Mammary epithelial cell (primary cell): ENCODE measurements at regions of chr14 and their contacts with region 1.

Region 1: GRCh38 chr14:52351233-52352060 is 37.3 kb downstream of the PTGER2 start:
- DNase-seq: peak; percentile 49
- H3K4me3 ChIP-seq: no peak overlapping the region
- H3K27ac ChIP-seq: no peak overlapping the region
- H3K4me1 ChIP-seq: peaks cover 44% of the 10 kb centered on the region
- H3K27me3 ChIP-seq: no peaks in the 10 kb centered on the region
- CTCF ChIP-seq: no peak

Region 2: DNA sequence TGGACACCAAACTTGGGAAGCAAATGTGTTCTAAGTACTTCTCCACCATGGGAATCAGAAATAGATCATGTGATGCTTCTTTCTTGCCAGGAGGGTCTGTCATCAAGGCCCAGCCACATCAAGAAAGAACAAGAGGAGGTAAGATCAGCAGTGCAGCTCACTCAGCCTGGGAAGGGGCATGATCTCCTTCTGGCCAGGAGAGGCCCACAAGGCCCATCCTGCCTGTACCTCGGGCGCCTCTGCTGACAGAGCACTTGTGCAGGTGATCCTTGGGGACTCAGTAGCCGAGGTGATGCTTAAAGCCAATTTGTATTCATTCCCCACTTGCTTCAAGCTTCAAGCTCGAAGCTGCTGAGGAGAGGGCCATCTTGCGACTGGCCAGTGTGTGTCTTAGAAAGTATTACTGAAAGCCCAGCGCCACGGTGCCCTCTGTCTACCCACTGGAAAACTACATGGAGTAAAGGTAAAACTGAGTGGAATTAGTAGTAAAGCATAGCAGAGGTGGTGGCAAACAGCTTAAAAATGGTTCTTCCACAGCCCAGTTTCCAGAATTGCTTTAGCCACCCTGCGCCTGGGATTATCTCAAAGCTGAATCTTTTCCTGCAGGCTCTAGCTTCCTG is 335.9 kb before region 1 on chr14:
- CTCF ChIA-PET with region 1: interaction called, 11 read pairs
- dilution Hi-C with region 1: no loop called
- in situ Hi-C with region 1: no loop called
- intact Hi-C with region 1: no loop called
- DNase-seq: no peak
- H3K4me3 ChIP-seq: no peak overlapping the region
- H3K27ac ChIP-seq: no peak overlapping the region
- H3K4me1 ChIP-seq: no peaks in the 10 kb centered on the region
- H3K27me3 ChIP-seq: no peaks in the 10 kb centered on the region
- CTCF ChIP-seq: peak; percentile 42 to 54

Region 3: DNA sequence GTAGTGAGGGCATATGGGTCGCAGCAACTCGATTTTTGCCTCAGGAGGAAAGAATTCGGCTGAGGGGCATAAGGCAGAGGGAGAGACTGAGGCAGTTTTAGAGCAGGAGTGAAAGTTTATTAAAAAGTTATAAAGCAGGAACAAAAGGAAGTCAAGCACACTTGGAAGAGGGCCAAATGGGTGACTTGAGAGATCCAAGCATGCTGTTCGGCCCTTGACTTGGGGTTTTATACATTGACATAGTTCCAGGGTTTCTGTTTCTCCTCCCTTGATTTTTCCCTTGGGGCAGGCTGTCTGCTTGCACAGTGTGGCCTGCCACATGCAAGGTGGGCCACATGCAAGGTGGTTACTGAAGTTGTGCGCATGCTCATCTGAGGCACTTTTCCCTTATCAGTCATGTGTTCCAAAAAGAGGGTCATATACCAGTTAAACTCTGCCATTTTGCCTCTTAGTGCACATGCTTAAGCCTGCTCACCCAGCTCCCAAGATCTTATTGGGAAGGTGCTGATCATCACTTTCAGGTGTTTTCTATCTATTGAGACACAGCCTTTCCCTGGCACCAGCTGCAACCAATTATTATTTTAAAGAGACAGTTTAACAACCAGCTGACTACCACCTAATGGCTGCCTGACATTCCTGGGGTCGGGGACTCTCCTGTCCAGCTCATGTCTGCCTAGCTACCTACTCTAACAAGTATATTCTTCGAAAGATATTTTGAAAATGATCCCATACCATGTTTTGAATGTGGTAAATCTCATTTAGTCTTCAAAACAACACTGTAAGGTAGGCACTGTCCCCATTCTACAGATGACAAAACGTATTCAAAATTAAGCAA is 17.4 kb before region 1 on chr14:
- CTCF ChIA-PET with region 1: interaction called, 6 read pairs
- dilution Hi-C with region 1: no loop called
- in situ Hi-C with region 1: no loop called
- intact Hi-C with region 1: loop called (anchors 2 kb)
- DNase-seq: no peak
- H3K4me3 ChIP-seq: no peak overlapping the region
- H3K27ac ChIP-seq: no peak overlapping the region
- H3K4me1 ChIP-seq: peaks cover 8% of the 10 kb centered on the region
- H3K27me3 ChIP-seq: no peaks in the 10 kb centered on the region
- CTCF ChIP-seq: no peak

Region 4: DNA sequence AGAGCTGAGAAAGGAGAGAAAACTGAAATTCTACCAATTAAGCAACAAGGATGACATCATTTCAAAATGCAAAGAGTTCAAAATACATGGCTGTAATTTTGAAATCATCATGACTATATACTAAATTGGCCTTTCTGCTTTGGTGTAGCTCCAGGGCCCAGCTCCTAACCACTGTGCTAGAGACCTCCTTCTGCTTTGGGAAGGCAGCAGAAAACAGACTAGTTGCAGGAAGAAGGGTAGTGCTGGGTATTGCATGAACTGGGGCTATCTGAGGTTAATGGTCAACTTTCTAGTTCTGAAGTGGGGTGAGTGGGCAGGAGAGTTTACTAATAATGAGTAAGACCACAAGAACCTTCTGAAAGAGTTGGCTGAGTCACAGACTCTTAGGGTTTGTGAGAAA is 28.8 kb after region 1 on chr14:
- CTCF ChIA-PET with region 1: no interaction called
- dilution Hi-C with region 1: no loop called
- in situ Hi-C with region 1: no loop called
- intact Hi-C with region 1: loop called (anchors 1 kb)
- DNase-seq: peak; percentile 82
- H3K4me3 ChIP-seq: no peak overlapping the region
- H3K27ac ChIP-seq: no peak overlapping the region
- H3K4me1 ChIP-seq: peaks cover 15% of the 10 kb centered on the region
- H3K27me3 ChIP-seq: no peaks in the 10 kb centered on the region
- CTCF ChIP-seq: no peak

Region 5: DNA sequence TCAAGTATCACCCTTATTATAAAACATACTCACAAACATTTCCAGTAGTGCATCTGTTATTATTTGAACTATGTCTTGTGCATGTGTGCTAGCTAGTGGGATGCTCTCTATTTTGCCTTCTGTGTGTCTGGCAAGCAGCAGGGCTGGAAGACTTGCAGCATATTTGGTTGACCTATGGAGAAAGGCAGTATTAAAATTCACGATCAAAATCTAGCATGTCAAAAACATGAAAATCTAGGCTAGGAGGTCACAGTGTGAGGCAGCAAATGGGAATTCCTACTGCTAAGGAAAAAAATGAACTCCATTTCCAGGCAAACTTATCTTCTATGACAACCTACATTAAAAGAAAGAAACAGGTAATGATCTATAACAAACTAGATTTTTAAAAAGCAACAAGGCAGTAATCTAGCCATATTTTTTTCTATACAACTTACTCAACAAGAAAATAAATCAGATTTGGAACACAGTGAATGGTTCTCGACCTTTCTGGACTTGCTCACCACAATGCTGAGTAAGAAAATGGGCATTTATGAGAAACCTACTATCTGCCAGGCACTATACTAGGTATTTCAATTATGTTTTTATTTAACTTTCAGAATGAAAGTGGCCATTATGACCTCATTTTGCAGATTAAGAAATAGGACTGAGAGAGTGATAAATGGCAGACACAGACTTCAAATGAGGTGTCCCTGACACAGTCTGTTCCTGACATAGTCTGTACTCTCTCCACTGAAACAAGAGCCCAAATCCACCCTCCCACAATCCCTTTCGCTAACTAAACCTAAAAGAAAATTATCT is 104.0 kb after region 1 on chr14:
- CTCF ChIA-PET with region 1: no interaction called
- dilution Hi-C with region 1: no loop called
- in situ Hi-C with region 1: no loop called
- intact Hi-C with region 1: loop called (anchors 10 kb)
- DNase-seq: peak; percentile 78
- H3K4me3 ChIP-seq: no peak overlapping the region
- H3K27ac ChIP-seq: peak overlapping the region; percentile 44
- H3K4me1 ChIP-seq: peaks cover 34% of the 10 kb centered on the region
- H3K27me3 ChIP-seq: no peaks in the 10 kb centered on the region
- CTCF ChIP-seq: no peak